ENCODE measurements at regions of chr3 and their contacts with region 1.

Region 1: DNA sequence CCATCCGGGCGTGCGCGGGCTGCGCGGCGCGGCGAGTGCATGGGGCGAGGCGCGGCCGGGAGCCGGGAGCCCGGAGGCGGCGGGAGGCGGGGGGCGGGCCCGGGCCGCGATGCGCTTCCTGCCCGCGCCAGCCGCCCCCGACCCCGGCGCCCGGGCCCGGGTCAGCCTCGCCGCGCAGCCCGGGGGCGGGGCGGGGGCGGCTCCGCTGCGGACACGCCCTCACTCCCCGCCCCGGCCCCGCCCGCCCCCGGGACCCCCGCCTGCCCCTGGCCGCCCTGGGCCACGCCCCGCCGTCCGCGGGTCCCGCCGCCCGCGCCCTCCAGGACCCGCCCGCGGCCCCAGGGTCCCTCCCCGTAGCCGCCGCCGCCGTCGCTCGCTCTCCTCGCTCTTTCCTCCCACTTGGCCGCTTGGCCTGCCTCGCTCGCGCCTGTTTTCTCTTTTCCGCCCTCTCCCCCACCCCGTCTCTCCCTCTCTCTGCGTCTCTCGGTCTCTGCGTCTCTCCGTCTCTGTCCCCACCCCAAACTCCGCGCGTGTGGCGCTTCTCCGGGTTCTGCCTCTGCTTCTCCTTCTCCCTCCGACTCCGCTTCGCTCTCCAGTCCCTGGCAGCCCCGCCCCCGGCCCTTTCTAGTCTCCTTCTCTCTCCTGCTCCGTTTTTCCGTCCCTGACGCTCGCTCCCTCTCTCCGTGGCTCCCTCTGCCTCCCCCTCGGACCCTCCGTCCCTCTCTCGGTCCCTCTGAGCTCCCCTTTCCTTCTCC is at the start of gene PLXND1:
- DNase-seq: peak; percentile 63
- ATAC-seq: peak; percentile 50
- H3K4me3 Mint-ChIP-seq: peak within 1 kb of the TSS; percentile 90
- H3K27ac Mint-ChIP-seq: peak within 1 kb of the TSS; percentile 63; the same call in 1 of the 2 replicates
- H3K4me1 Mint-ChIP-seq: peaks cover 63% of the 10 kb centered on the region
- H3K27me3 Mint-ChIP-seq: peaks cover 39% of the 10 kb centered on the region
- CTCF ChIP-seq: no peak
- total RNA-seq, gene PLXND1: 56.7 to 63.9 TPM (median 57.4 TPM) in 3 replicates

Region 2: GRCh38 chr3:129596194-129597086 is 10.4 kb before region 1 on chr3:
- CTCF ChIA-PET with region 1: interaction called, 16 read pairs
- POLR2A ChIA-PET with region 1: interaction called, 3 read pairs
- DNase-seq: no peak
- ATAC-seq: peak; percentile 7
- H3K4me3 Mint-ChIP-seq: no peak overlapping the region
- H3K27ac Mint-ChIP-seq: no peak overlapping the region; the same call in 1 of the 2 replicates
- H3K4me1 Mint-ChIP-seq: peaks cover 82% of the 10 kb centered on the region
- H3K27me3 Mint-ChIP-seq: no peaks in the 10 kb centered on the region
- CTCF ChIP-seq: no peak

Measured in WTC11 (cell line).